MCF 10A (cell line): ENCODE measurements at regions of chr11 and their contacts with region 1.

Region 1: DNA sequence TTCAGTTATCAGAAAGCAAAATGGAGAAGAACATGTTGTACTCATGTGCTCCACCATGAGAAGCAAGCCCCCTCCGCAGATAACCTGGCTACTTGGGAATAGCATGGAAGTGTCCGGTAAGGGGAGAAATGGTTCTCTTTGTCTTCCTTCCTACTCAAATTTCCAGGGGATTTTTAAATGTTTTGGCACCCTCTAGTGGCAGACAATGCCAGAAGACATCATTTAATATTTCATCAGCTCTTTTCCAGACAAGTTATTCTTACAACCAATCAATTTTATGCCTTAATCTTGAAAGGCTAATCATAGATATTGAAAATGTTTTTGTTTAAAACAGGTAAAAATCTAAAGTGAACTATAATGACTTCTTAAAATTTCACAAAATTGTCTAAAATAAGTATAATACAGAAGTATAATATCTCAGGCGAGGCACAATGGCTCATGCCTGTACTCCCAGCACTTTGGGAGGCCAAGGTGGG is 15.7 kb downstream of the CRTAM start:
- DNase-seq: peak; percentile 81
- H3K4me3 Mint-ChIP-seq: no peak overlapping the region
- H3K27ac Mint-ChIP-seq: no peak overlapping the region
- H3K4me1 Mint-ChIP-seq: peaks cover 20% of the 10 kb centered on the region
- H3K27me3 Mint-ChIP-seq: no peaks in the 10 kb centered on the region
- CTCF ChIP-seq: peak; percentile 57

Region 2: GRCh38 chr11:122578168-122578825 is 275.7 kb before region 1 on chr11:
- CTCF ChIA-PET with region 1: interaction called, 47 read pairs
- POLR2A ChIA-PET with region 1: interaction called, 14 read pairs
- intact Hi-C with region 1: loop called (anchors 1 kb)
- DNase-seq: peak; percentile 11
- H3K4me3 Mint-ChIP-seq: no peak overlapping the region
- H3K27ac Mint-ChIP-seq: no peak overlapping the region
- H3K4me1 Mint-ChIP-seq: peaks cover 15% of the 10 kb centered on the region
- H3K27me3 Mint-ChIP-seq: no peaks in the 10 kb centered on the region
- CTCF ChIP-seq: no peak

Region 3: DNA sequence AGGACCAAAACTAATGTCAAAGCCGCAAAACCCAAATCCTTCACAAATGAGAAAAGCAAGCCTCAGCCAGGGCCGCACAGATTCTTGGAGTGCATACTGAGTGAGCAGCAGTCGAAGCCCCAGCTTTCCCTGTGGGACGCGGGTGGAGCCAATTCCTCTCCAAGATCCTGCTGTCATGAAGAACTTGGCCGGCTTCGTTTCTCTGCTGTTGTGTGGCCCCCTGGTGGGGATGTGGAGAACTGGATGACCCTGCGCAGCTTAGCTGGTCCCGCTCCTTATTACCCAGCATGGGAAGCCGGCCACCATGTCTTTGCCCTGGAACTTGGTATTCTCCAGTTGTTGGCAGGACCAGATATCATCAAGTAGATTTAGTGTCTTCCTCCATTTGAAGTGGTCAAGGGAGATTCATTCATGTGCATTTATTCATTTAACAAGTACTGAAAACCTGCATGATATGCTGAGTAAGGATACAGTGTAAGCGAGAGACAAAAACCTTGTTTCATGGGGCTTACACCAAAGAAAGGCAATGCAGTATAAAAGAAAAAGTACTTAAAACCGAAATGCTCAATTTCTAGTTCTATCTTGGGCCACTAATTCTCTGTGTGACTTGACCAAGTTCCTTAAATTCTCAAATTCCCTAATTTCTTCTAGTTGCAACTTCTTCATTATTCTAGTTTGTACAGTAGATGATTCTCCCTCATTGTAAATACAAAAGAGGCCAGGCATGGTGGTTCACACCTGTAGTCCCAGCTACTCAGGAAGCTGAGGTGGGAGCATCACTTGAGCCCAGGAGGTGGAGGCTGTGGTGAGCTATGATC is 72.4 kb before region 1 on chr11:
- CTCF ChIA-PET with region 1: interaction called, 404 read pairs
- POLR2A ChIA-PET with region 1: interaction called, 3 read pairs
- intact Hi-C with region 1: loop called (anchors 1 kb)
- DNase-seq: peak; percentile 86
- H3K4me3 Mint-ChIP-seq: no peak overlapping the region
- H3K27ac Mint-ChIP-seq: no peak overlapping the region
- H3K4me1 Mint-ChIP-seq: peaks cover 12% of the 10 kb centered on the region
- H3K27me3 Mint-ChIP-seq: no peaks in the 10 kb centered on the region
- CTCF ChIP-seq: peak; percentile 86

Region 4: DNA sequence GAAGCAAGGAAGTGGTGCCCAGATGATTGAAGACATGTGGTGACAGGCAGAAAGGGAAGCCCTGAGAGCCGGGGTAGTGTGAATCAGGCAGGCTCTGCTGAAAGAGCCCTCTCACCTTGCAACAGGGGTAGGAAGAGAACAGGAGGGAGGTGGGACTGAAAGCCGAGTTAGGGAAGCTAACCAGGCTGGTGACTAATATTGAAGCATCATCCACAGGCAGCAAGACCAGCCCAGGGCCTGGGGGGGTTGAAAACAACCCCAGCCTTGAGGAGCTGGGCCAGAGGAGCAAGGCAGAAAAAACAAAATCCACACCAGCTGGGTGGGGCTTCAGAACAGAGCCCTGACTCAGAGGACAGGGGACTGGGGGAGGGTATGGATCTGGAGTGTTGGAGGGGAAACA is 50.7 kb before region 1 on chr11:
- CTCF ChIA-PET with region 1: interaction called, 404 read pairs
- POLR2A ChIA-PET with region 1: interaction called, 16 read pairs
- intact Hi-C with region 1: no loop called
- DNase-seq: peak; percentile 95
- H3K4me3 Mint-ChIP-seq: peak overlapping the region; percentile 55
- H3K27ac Mint-ChIP-seq: peak overlapping the region; percentile 97
- H3K4me1 Mint-ChIP-seq: peaks cover 36% of the 10 kb centered on the region
- H3K27me3 Mint-ChIP-seq: no peaks in the 10 kb centered on the region
- CTCF ChIP-seq: no peak

Region 5: DNA sequence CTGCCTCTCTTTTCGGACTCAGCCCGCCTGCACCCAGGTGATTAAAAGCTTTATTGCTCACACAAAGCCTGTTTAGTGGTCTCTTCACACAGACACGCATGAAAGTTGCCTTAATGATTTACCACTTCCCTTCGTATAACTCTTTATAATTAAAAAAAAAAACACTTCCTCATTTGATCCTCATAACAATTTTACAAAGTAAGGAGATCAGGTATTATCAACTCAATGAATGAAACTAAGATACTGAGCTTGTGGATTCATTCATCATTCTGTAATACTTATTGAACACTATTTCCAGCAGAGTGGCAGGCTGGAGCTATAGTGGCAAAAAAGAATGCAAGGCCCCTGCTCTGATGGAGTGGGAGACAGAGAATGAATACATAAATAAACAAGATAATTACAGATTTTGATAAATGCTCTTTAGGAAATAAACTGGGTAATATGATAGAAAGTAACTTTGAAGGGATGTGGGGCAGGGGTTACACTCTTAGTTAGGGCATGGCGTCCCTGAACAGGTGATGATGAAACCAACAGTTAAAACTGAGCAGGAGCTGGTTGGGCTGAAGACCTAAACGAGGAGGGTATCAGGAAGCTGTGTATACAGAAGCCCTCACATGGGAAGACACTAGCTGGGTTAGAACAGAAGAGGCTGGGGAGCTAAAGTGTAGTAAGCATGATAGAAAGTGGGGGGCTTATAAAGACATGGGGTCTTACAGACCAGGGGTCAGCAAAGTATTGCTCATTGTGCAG is 21.1 kb before region 1 on chr11:
- CTCF ChIA-PET with region 1: interaction called, 16 read pairs
- POLR2A ChIA-PET with region 1: interaction called, 4 read pairs
- intact Hi-C with region 1: no loop called
- DNase-seq: no peak
- H3K4me3 Mint-ChIP-seq: no peak overlapping the region
- H3K27ac Mint-ChIP-seq: no peak overlapping the region
- H3K4me1 Mint-ChIP-seq: peaks cover 16% of the 10 kb centered on the region
- H3K27me3 Mint-ChIP-seq: no peaks in the 10 kb centered on the region
- CTCF ChIP-seq: no peak